CD8-positive, alpha-beta T cell (primary cell): ENCODE measurements at regions of chr7 and their contacts with region 1.

Region 1: GRCh38 chr7:137898839-137899721 is 52.3 kb upstream of the DGKI start:
- DNase-seq: peak; percentile 44 to 85 (median 77)
- ATAC-seq: peak; percentile 96
- H3K4me3 ChIP-seq: peak overlapping the region in 1 of 2 experiments; percentile 28
- H3K4me3 Mint-ChIP-seq: peak overlapping the region; percentile 44
- H3K27ac ChIP-seq: no peak overlapping the region
- H3K27ac Mint-ChIP-seq: peak overlapping the region; percentile 27
- H3K4me1 ChIP-seq: peaks cover 9% of the 10 kb centered on the region
- H3K4me1 Mint-ChIP-seq: peaks cover 18% of the 10 kb centered on the region
- H3K27me3 ChIP-seq: no peaks in the 10 kb centered on the region
- H3K27me3 Mint-ChIP-seq: no peaks in the 10 kb centered on the region
- CTCF ChIP-seq: peak; percentile 94

Region 2: GRCh38 chr7:137915266-137915665 is 16.2 kb after region 1 on chr7:
- CTCF ChIA-PET with region 1: interaction called, 19 read pairs
- POLR2A ChIA-PET with region 1: no interaction called
- intact Hi-C with region 1: no loop called
- DNase-seq: no peak
- ATAC-seq: no peak
- H3K4me3 ChIP-seq: no peak overlapping the region
- H3K4me3 Mint-ChIP-seq: no peak overlapping the region
- H3K27ac ChIP-seq: no peak overlapping the region
- H3K27ac Mint-ChIP-seq: no peak overlapping the region
- H3K4me1 ChIP-seq: no peaks in the 10 kb centered on the region
- H3K4me1 Mint-ChIP-seq: no peaks in the 10 kb centered on the region
- H3K27me3 ChIP-seq: no peaks in the 10 kb centered on the region
- H3K27me3 Mint-ChIP-seq: no peaks in the 10 kb centered on the region
- CTCF ChIP-seq: no peak

Region 3: GRCh38 chr7:137992550-137993394 is 93.7 kb after region 1 on chr7:
- CTCF ChIA-PET with region 1: interaction called, 17 read pairs
- POLR2A ChIA-PET with region 1: no interaction called
- intact Hi-C with region 1: no loop called
- DNase-seq: no peak
- ATAC-seq: no peak
- H3K4me3 ChIP-seq: no peak overlapping the region
- H3K4me3 Mint-ChIP-seq: no peak overlapping the region
- H3K27ac ChIP-seq: no peak overlapping the region
- H3K27ac Mint-ChIP-seq: no peak overlapping the region
- H3K4me1 ChIP-seq: no peaks in the 10 kb centered on the region
- H3K4me1 Mint-ChIP-seq: peaks cover 30% of the 10 kb centered on the region
- H3K27me3 ChIP-seq: no peaks in the 10 kb centered on the region
- H3K27me3 Mint-ChIP-seq: no peaks in the 10 kb centered on the region
- CTCF ChIP-seq: no peak

Region 4: DNA sequence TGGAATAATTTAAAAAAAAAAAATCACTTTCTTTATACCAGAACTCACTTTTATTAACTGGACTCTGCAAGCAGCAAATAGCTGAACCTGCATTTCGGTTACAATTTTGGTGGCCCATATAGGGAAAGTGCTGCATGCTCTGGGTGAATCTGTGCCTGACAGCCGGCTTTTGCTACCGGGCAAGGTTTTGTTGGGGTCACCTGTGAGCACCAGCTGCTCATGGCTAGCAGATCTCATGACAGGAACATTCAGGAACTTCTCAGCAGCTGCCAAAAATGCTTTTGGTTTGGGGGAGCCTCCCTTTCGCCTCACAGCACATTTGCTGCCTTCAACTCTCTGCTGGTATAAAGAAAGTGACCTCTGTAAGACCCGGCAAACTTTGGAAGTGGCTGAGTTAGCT is 116.0 kb after region 1 on chr7:
- CTCF ChIA-PET with region 1: interaction called, 79 read pairs
- POLR2A ChIA-PET with region 1: no interaction called
- intact Hi-C with region 1: no loop called
- DNase-seq: no peak
- ATAC-seq: no peak
- H3K4me3 ChIP-seq: no peak overlapping the region
- H3K4me3 Mint-ChIP-seq: no peak overlapping the region
- H3K27ac ChIP-seq: no peak overlapping the region
- H3K27ac Mint-ChIP-seq: no peak overlapping the region
- H3K4me1 ChIP-seq: no peaks in the 10 kb centered on the region
- H3K4me1 Mint-ChIP-seq: no peaks in the 10 kb centered on the region
- H3K27me3 ChIP-seq: no peaks in the 10 kb centered on the region
- H3K27me3 Mint-ChIP-seq: no peaks in the 10 kb centered on the region
- CTCF ChIP-seq: no peak

Region 5: GRCh38 chr7:138500892-138501291 is 601.8 kb after region 1 on chr7:
- CTCF ChIA-PET with region 1: no interaction called
- POLR2A ChIA-PET with region 1: no interaction called
- intact Hi-C with region 1: no loop called
- DNase-seq: no peak
- ATAC-seq: no peak
- H3K4me3 ChIP-seq: no peak overlapping the region
- H3K4me3 Mint-ChIP-seq: no peak overlapping the region
- H3K27ac ChIP-seq: no peak overlapping the region
- H3K27ac Mint-ChIP-seq: no peak overlapping the region
- H3K4me1 ChIP-seq: no peaks in the 10 kb centered on the region
- H3K4me1 Mint-ChIP-seq: peaks cover 45% of the 10 kb centered on the region
- H3K27me3 ChIP-seq: no peaks in the 10 kb centered on the region
- H3K27me3 Mint-ChIP-seq: no peaks in the 10 kb centered on the region
- CTCF ChIP-seq: no peak

Region 6: GRCh38 chr7:138738551-138739335 is 839.7 kb after region 1 on chr7:
- CTCF ChIA-PET with region 1: interaction called, 8 read pairs
- POLR2A ChIA-PET with region 1: no interaction called
- intact Hi-C with region 1: loop called (anchors 1 kb)
- DNase-seq: peak; percentile 68 to 90 (median 84)
- ATAC-seq: peak; percentile 99
- H3K4me3 ChIP-seq: no peak overlapping the region
- H3K4me3 Mint-ChIP-seq: no peak overlapping the region
- H3K27ac ChIP-seq: no peak overlapping the region
- H3K27ac Mint-ChIP-seq: no peak overlapping the region
- H3K4me1 ChIP-seq: no peaks in the 10 kb centered on the region
- H3K4me1 Mint-ChIP-seq: peaks cover 3% of the 10 kb centered on the region
- H3K27me3 ChIP-seq: no peaks in the 10 kb centered on the region
- H3K27me3 Mint-ChIP-seq: no peaks in the 10 kb centered on the region
- CTCF ChIP-seq: peak; percentile 94